ENCODE measurements at regions of chr13 and their contacts with region 1.

Region 1: GRCh38 chr13:40961214-40961613 is 57.9 kb downstream of the ELF1 start:
- DNase-seq: no peak
- ATAC-seq: peak; percentile 75
- H3K4me3 Mint-ChIP-seq: peak overlapping the region; percentile 73
- H3K27ac Mint-ChIP-seq: peak overlapping the region; percentile 83
- H3K4me1 Mint-ChIP-seq: peaks cover 76% of the 10 kb centered on the region
- H3K27me3 Mint-ChIP-seq: no peaks in the 10 kb centered on the region
- CTCF ChIP-seq: no peak

Region 2: GRCh38 chr13:40517486-40518480 is 443.4 kb before region 1 on chr13:
- CTCF ChIA-PET with region 1: no interaction called
- POLR2A ChIA-PET with region 1: no interaction called
- intact Hi-C with region 1: no loop called
- DNase-seq: no peak
- ATAC-seq: peak; percentile 70
- H3K4me3 Mint-ChIP-seq: peak overlapping the region; percentile 44
- H3K27ac Mint-ChIP-seq: peak overlapping the region; percentile 67
- H3K4me1 Mint-ChIP-seq: peaks cover 43% of the 10 kb centered on the region
- H3K27me3 Mint-ChIP-seq: no peaks in the 10 kb centered on the region
- CTCF ChIP-seq: no peak

Region 3: GRCh38 chr13:40863723-40864122 is 97.5 kb before region 1 on chr13:
- CTCF ChIA-PET with region 1: no interaction called
- POLR2A ChIA-PET with region 1: no interaction called
- intact Hi-C with region 1: no loop called
- DNase-seq: no peak
- ATAC-seq: no peak
- H3K4me3 Mint-ChIP-seq: no peak overlapping the region
- H3K27ac Mint-ChIP-seq: no peak overlapping the region
- H3K4me1 Mint-ChIP-seq: no peaks in the 10 kb centered on the region
- H3K27me3 Mint-ChIP-seq: no peaks in the 10 kb centered on the region
- CTCF ChIP-seq: no peak

Region 4: GRCh38 chr13:40940841-40941240 is 20.4 kb before region 1 on chr13:
- CTCF ChIA-PET with region 1: no interaction called
- POLR2A ChIA-PET with region 1: no interaction called
- intact Hi-C with region 1: loop called (anchors 2 kb)
- DNase-seq: no peak
- ATAC-seq: no peak
- H3K4me3 Mint-ChIP-seq: no peak overlapping the region
- H3K27ac Mint-ChIP-seq: no peak overlapping the region
- H3K4me1 Mint-ChIP-seq: peaks cover 12% of the 10 kb centered on the region
- H3K27me3 Mint-ChIP-seq: no peaks in the 10 kb centered on the region
- CTCF ChIP-seq: no peak